ENCODE measurements at regions of chr2 and their contacts with region 1.

Region 1: GRCh38 chr2:98412751-98413458 is 31.8 kb upstream of the INPP4A start:
- DNase-seq: no peak
- ATAC-seq: peak; percentile 91

Region 2: GRCh38 chr2:98444436-98445176 is 31.7 kb after region 1 on chr2 and contains the start of gene INPP4A:
- intact Hi-C with region 1: no loop called
- DNase-seq: peak; percentile 87
- ATAC-seq: peak; percentile 97
- total RNA-seq, gene INPP4A: 16.8 TPM

Region 3: DNA sequence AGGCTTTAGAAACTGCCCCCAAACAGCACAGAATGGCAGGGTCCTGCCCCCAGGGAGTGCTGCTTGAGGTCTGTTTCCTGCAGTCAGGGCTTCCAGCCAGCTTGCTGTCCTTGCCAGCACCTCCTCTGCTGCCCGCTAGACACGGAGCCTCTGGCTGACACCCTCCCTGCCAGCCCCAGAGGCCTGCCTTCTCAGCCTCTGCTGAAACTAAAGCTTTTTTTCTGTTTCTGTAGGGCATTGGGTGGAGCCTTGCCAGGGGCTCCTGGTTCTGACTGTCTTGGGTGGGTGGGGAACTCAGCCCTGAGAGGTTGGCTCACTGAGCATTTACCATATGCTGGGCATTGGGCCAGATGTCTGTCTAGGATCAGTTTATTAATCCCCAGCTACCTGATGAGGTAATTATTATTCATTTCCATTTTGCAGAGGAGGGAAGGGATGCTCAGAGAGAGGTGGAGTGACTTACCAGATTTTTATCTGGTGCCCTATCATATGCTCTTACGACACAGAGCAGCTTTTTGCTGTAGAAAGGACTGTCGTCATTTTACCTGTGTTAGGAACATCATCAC is 67.1 kb after region 1 on chr2:
- intact Hi-C with region 1: no loop called
- DNase-seq: peak; percentile 81
- ATAC-seq: peak; percentile 89

Region 4: GRCh38 chr2:98577313-98577712 is 164.4 kb after region 1 on chr2:
- intact Hi-C with region 1: loop called (anchors 10 kb)
- DNase-seq: no peak
- ATAC-seq: peak; percentile 71

Region 5: DNA sequence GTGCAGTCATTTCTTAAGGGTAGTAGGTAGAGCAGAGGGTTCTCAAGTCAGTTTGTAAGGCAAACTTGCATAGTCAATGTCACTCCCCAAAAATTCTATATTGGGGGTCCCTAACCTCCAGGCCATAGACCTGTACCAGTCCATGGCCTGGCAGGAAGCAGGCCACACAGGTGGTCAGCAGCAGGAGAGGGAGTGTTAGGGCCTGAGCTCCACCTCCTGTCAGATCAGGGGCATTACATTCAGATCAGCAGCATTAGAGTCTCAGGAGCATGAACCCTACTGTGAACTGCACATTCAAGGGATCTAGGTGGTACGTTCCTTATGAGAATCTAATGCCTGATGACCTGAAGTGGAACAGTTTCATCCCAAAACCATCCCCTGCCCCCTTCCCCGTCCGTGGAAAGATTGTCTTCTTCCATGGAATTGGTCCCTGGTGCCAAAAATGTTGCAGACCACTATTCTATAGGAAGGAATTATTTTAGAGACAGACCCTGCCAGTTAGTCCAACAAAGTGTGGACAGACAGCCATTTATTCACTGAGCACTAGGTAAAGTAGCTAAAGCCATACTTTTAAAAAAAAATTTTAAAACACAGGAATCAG is 188.7 kb after region 1 on chr2:
- intact Hi-C with region 1: loop called (anchors 5 kb)
- DNase-seq: no peak
- ATAC-seq: peak; percentile 73

Region 6: GRCh38 chr2:98691303-98691702 is 278.4 kb after region 1 on chr2:
- intact Hi-C with region 1: no loop called
- DNase-seq: no peak
- ATAC-seq: no peak

Measured in Right ventricle myocardium superior (tissue), 1 donor.